OCI-LY7 (cell line): ENCODE measurements at regions of chr3 and their contacts with region 1.

Region 1: DNA sequence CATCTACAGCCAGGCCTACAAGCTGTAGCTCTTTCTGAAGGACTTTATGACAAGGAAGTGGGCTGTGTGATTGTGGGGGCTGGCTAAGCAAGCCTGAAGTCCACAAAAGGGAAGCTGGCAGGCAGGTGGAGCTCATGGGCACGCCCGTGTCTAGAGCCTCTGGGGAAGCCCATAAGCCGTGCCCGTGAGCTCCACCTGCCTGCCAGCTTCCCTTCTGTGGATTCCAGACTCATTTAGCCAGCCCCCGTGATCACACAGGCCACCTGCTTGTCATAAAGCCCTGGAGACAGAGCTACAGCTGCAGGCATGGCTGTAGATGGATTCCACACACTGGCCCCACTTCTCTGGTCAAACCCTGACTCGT is 15.2 kb downstream of the EFCC1 start:
- DNase-seq: peak; percentile 90
- H3K4me3 ChIP-seq: no peak overlapping the region
- H3K27ac ChIP-seq: peak overlapping the region; percentile 53
- H3K4me1 ChIP-seq: peaks cover 32% of the 10 kb centered on the region
- CTCF ChIP-seq: peak; percentile 64

Region 2: GRCh38 chr3:128983293-128984069 is 32.9 kb before region 1 on chr3:
- CTCF ChIA-PET with region 1: no interaction called
- POLR2A ChIA-PET with region 1: no interaction called
- intact Hi-C with region 1: no loop called
- DNase-seq: no peak
- H3K4me3 ChIP-seq: no peak overlapping the region
- H3K27ac ChIP-seq: no peak overlapping the region
- H3K4me1 ChIP-seq: no peaks in the 10 kb centered on the region
- CTCF ChIP-seq: no peak

Region 3: GRCh38 chr3:128993461-128994173 is 22.7 kb before region 1 on chr3 and contains the start of gene CFAP92:
- CTCF ChIA-PET with region 1: interaction called, 18 read pairs
- POLR2A ChIA-PET with region 1: interaction called, 5 read pairs
- intact Hi-C with region 1: no loop called
- DNase-seq: peak; percentile 88
- H3K4me3 ChIP-seq: peak within 1 kb of the TSS; percentile 55
- H3K27ac ChIP-seq: peak within 1 kb of the TSS; percentile 23
- H3K4me1 ChIP-seq: peaks cover 36% of the 10 kb centered on the region
- CTCF ChIP-seq: no peak
- total RNA-seq, gene CFAP92: 0.66 TPM in 1 of 2 replicates, not detected in the other

Region 4: GRCh38 chr3:129026728-129027543 is 10.6 kb after region 1 on chr3:
- CTCF ChIA-PET with region 1: interaction called, 19 read pairs
- POLR2A ChIA-PET with region 1: interaction called, 24 read pairs
- intact Hi-C with region 1: no loop called
- DNase-seq: peak; percentile 98
- H3K4me3 ChIP-seq: peak overlapping the region; percentile 66
- H3K27ac ChIP-seq: peak overlapping the region; percentile 44
- H3K4me1 ChIP-seq: peaks cover 38% of the 10 kb centered on the region
- CTCF ChIP-seq: peak; percentile 89